Natural killer cell (primary cell): ENCODE measurements at regions of chr20 and their contacts with region 1.

Region 1: GRCh38 chr20:57432874-57433491 is 41.8 kb downstream of the RBM38 start:
- DNase-seq: peak; percentile 53 to 82
- ATAC-seq: peak; percentile 64 to 80 (median 74)
- H3K4me3 ChIP-seq: no peak overlapping the region
- H3K4me3 Mint-ChIP-seq: peak overlapping the region; percentile 83
- H3K27ac ChIP-seq: peak overlapping the region; percentile 75
- H3K27ac Mint-ChIP-seq: peak overlapping the region; percentile 92 to 93
- H3K4me1 ChIP-seq: peaks cover 77% of the 10 kb centered on the region
- H3K4me1 Mint-ChIP-seq: peaks cover 57 to 59% of the 10 kb centered on the region in 2 donors
- H3K27me3 ChIP-seq: no peaks in the 10 kb centered on the region
- H3K27me3 Mint-ChIP-seq: no peaks in the 10 kb centered on the region
- CTCF ChIP-seq: no peak

Region 2: GRCh38 chr20:57383447-57384347 is 49.3 kb before region 1 on chr20:
- intact Hi-C with region 1: loop called (anchors 2 kb)
- DNase-seq: no peak
- ATAC-seq: peak; percentile 40 to 59 (median 56)
- H3K4me3 ChIP-seq: no peak overlapping the region
- H3K4me3 Mint-ChIP-seq: peak overlapping the region; percentile 58
- H3K27ac ChIP-seq: peak overlapping the region; percentile 4
- H3K27ac Mint-ChIP-seq: peak overlapping the region; percentile 84 to 87
- H3K4me1 ChIP-seq: peaks cover 34% of the 10 kb centered on the region
- H3K4me1 Mint-ChIP-seq: peaks cover 40 to 47% of the 10 kb centered on the region in 2 donors
- H3K27me3 ChIP-seq: no peaks in the 10 kb centered on the region
- H3K27me3 Mint-ChIP-seq: no peaks in the 10 kb centered on the region
- CTCF ChIP-seq: no peak

Region 3: DNA sequence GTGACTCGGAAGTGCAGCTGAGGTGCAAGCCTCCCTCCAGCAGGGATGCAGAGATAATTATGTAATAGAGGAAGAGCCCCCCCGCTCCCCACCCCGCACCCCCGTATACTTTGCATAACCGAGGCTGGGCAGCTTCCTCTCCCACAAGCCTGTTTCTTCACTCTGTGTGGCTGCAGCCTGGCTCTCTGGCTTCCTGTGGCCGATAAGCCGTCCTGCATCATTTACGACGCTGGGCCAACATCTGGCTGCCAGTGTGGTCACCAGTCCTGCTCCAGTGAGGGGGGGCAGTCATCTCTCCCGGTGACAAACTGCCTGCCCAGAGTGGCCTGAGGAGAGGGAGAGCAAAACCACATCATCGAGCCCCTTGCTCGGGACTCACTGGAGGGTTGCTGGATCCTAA is 17.4 kb after region 1 on chr20:
- intact Hi-C with region 1: loop called (anchors 2 kb)
- DNase-seq: peak in 1 of 2 donors; percentile 43
- ATAC-seq: peak; percentile 64 to 84 (median 80)
- H3K4me3 ChIP-seq: no peak overlapping the region
- H3K4me3 Mint-ChIP-seq: peak overlapping the region; percentile 77
- H3K27ac ChIP-seq: peak overlapping the region; percentile 4
- H3K27ac Mint-ChIP-seq: peak overlapping the region; percentile 76 to 87
- H3K4me1 ChIP-seq: peaks cover 43% of the 10 kb centered on the region
- H3K4me1 Mint-ChIP-seq: peaks cover 46 to 47% of the 10 kb centered on the region in 2 donors
- H3K27me3 ChIP-seq: no peaks in the 10 kb centered on the region
- H3K27me3 Mint-ChIP-seq: no peaks in the 10 kb centered on the region
- CTCF ChIP-seq: no peak

Region 4: GRCh38 chr20:57473246-57474048 is 40.5 kb after region 1 on chr20:
- intact Hi-C with region 1: loop called (anchors 5 kb)
- DNase-seq: peak; percentile 44 to 52
- ATAC-seq: peak; percentile 87 to 94 (median 91)
- H3K4me3 ChIP-seq: no peak overlapping the region
- H3K4me3 Mint-ChIP-seq: peak overlapping the region; percentile 60
- H3K27ac ChIP-seq: peak overlapping the region; percentile 17
- H3K27ac Mint-ChIP-seq: peak overlapping the region; percentile 74 to 87
- H3K4me1 ChIP-seq: peaks cover 61% of the 10 kb centered on the region
- H3K4me1 Mint-ChIP-seq: peaks cover 33 to 50% of the 10 kb centered on the region in 2 donors
- H3K27me3 ChIP-seq: no peaks in the 10 kb centered on the region
- H3K27me3 Mint-ChIP-seq: peaks cover 0 to 8% of the 10 kb centered on the region in 2 donors
- CTCF ChIP-seq: no peak